Naive thymus-derived CD4-positive, alpha-beta T cell (primary cell): ENCODE measurements at regions of chr1 and their contacts with region 1.

Region 1: GRCh38 chr1:89942825-89943688 is 51.9 kb upstream of the ZNF326 start:
- DNase-seq: no peak
- ATAC-seq: peak; percentile 63
- H3K4me3 ChIP-seq: no peak overlapping the region
- H3K4me3 Mint-ChIP-seq: no peak overlapping the region
- H3K27ac ChIP-seq: no peak overlapping the region
- H3K27ac Mint-ChIP-seq: peak overlapping the region in 1 of 9 donors; percentile 50
- H3K4me1 ChIP-seq: no peaks in the 10 kb centered on the region
- H3K4me1 Mint-ChIP-seq: peaks cover 0 to 3% (median 0%) of the 10 kb centered on the region in 7 donors
- H3K27me3 ChIP-seq: no peaks in the 10 kb centered on the region
- H3K27me3 Mint-ChIP-seq: peaks cover 0 to 2% (median 0%) of the 10 kb centered on the region in 5 donors

Region 2: GRCh38 chr1:89908672-89909436 is 34.2 kb before region 1 on chr1:
- CTCF ChIA-PET with region 1: no interaction called
- POLR2A ChIA-PET with region 1: no interaction called
- intact Hi-C with region 1: loop called in 1 of 2 experiments (anchors 5 kb)
- DNase-seq: no peak
- ATAC-seq: peak; percentile 67
- H3K4me3 ChIP-seq: no peak overlapping the region
- H3K4me3 Mint-ChIP-seq: peak overlapping the region in 1 of 10 donors; percentile 18
- H3K27ac ChIP-seq: no peak overlapping the region
- H3K27ac Mint-ChIP-seq: peak overlapping the region in 8 of 9 donors; percentile 13 to 70 (median 30)
- H3K4me1 ChIP-seq: no peaks in the 10 kb centered on the region
- H3K4me1 Mint-ChIP-seq: peaks cover 32 to 72% (median 53%) of the 10 kb centered on the region in 7 donors
- H3K27me3 ChIP-seq: no peaks in the 10 kb centered on the region
- H3K27me3 Mint-ChIP-seq: no peaks in the 10 kb centered on the region

Region 3: DNA sequence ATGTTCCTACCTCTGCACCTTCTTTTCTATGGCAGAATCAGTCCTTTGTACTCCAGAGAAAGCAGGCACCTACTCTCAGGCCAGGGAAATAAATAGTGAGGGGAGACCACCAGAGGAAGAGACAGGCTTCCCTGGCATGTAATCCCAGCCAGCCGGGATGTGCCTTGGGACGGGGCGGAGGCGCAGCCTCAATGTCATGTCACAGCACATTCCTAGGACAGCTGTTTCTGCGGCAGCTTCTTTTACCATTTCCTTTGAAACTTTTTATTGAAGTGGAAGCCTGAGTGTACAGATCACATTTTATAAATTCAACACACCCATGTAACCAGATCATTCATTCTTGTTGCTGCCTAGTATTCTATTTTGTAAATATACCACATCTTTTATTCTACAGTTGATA is 16.0 kb before region 1 on chr1:
- CTCF ChIA-PET with region 1: no interaction called
- POLR2A ChIA-PET with region 1: interaction called, 3 read pairs
- intact Hi-C with region 1: loop called in 1 of 2 experiments (anchors 2 kb)
- DNase-seq: no peak
- ATAC-seq: no peak
- H3K4me3 ChIP-seq: no peak overlapping the region
- H3K4me3 Mint-ChIP-seq: no peak overlapping the region
- H3K27ac ChIP-seq: no peak overlapping the region
- H3K27ac Mint-ChIP-seq: peak overlapping the region in 3 of 9 donors; percentile 17 to 47 (median 19)
- H3K4me1 ChIP-seq: no peaks in the 10 kb centered on the region
- H3K4me1 Mint-ChIP-seq: peaks cover 7 to 35% (median 27%) of the 10 kb centered on the region in 7 donors
- H3K27me3 ChIP-seq: no peaks in the 10 kb centered on the region
- H3K27me3 Mint-ChIP-seq: no peaks in the 10 kb centered on the region

Region 4: DNA sequence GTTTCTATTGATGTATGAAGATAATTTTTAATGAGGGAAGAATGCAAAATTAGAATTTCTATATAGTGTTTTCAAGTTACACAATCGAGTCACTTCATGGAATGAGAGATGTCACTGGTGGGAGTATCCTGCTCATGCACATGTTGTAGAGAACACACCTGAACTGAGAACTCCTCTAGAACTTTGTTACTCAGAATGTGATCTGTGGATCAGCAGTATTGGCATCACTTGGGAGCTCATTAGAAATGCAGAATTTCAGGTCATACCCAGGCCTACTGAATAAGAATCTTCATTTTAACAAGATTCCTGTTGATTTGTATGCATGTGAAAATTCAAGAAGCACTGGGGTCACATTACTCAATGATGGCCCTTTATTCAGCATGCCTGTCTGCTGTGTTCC is 80.6 kb after region 1 on chr1:
- CTCF ChIA-PET with region 1: no interaction called
- POLR2A ChIA-PET with region 1: no interaction called
- intact Hi-C with region 1: no loop called
- DNase-seq: no peak
- ATAC-seq: no peak
- H3K4me3 ChIP-seq: no peak overlapping the region
- H3K4me3 Mint-ChIP-seq: no peak overlapping the region
- H3K27ac ChIP-seq: no peak overlapping the region
- H3K27ac Mint-ChIP-seq: no peak overlapping the region
- H3K4me1 ChIP-seq: no peaks in the 10 kb centered on the region
- H3K4me1 Mint-ChIP-seq: peaks cover 0 to 4% (median 0%) of the 10 kb centered on the region in 7 donors
- H3K27me3 ChIP-seq: no peaks in the 10 kb centered on the region
- H3K27me3 Mint-ChIP-seq: no peaks in the 10 kb centered on the region